A673 (cell line): ENCODE measurements at regions of chr2 and their contacts with region 1.

Region 1: DNA sequence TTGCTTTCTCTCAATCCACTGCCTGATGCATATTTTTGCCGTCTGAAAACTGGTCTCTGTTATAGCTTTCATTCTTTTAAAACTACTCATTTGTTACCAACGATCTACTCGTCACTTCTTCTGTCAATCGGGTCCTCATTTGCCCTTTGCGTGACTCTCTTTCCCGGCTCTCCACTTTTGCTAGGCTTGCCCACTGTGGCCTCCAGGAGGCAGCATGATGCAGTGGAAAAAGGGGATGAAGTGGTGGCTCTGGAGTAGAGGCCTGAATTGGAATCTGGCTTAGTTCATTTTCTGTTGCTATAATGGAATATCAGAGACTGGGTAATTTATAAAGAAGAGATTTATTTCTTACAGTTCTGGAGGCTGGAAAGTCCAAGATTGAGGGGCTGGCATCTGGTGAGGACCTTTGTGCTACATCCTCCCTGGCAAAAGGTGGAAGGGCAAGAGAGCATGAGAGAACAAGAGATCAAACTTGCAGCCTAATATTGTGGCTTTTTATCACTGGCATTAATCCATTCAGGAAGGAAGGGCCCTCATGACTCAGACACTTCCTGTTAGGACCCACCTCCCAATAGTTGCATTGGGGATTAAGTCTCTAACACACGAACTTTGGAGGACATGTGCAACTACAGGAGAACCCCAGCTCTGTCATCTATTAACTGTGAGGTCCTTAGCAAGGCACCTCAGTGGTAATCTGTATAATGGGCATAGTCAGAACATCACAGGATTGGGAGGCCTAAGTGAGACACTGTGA is 15.4 kb downstream of the GDF7 start:
- DNase-seq: no peak
- H3K4me3 ChIP-seq: no peak overlapping the region
- H3K27ac ChIP-seq: no peak overlapping the region
- H3K4me1 ChIP-seq: no peaks in the 10 kb centered on the region
- H3K27me3 ChIP-seq: no peaks in the 10 kb centered on the region
- CTCF ChIP-seq: peak; percentile 58

Region 2: DNA sequence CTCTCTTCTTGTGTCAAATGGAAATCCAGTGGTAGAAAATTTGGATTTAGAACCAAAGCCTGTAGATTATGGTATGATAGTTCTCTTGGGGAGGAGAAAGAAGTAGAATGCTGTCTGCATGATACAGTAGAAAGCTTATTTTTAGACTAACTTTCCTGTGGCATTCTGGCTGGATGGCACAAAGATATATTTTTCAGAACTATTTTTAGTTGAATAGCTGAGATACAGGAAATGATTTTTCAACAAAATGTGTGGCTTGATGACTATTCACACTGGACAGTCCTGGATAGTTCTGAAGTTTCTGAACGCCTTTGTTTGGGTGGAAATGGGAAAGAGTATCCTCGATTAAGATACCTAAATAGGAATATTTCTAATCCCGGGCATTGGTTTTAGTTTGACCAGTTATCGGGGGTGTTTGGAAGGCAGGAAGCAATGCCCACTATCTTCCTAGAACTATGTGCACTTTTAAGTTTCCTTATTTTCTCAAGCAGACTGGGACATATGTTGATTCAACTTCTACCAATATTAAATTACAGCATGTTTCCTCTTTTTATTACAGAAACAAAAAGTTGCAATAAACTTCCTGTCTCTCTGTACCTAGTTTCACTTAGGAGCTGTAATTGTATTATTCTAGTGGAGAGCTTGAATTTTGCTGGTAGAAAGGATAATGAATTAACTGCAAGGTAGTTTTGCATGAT is 16.7 kb after region 1 on chr2:
- CTCF ChIA-PET with region 1: no interaction called
- POLR2A ChIA-PET with region 1: no interaction called
- intact Hi-C with region 1: no loop called
- DNase-seq: no peak
- H3K4me3 ChIP-seq: no peak overlapping the region
- H3K27ac ChIP-seq: no peak overlapping the region
- H3K4me1 ChIP-seq: no peaks in the 10 kb centered on the region
- H3K27me3 ChIP-seq: no peaks in the 10 kb centered on the region
- CTCF ChIP-seq: no peak

Region 3: DNA sequence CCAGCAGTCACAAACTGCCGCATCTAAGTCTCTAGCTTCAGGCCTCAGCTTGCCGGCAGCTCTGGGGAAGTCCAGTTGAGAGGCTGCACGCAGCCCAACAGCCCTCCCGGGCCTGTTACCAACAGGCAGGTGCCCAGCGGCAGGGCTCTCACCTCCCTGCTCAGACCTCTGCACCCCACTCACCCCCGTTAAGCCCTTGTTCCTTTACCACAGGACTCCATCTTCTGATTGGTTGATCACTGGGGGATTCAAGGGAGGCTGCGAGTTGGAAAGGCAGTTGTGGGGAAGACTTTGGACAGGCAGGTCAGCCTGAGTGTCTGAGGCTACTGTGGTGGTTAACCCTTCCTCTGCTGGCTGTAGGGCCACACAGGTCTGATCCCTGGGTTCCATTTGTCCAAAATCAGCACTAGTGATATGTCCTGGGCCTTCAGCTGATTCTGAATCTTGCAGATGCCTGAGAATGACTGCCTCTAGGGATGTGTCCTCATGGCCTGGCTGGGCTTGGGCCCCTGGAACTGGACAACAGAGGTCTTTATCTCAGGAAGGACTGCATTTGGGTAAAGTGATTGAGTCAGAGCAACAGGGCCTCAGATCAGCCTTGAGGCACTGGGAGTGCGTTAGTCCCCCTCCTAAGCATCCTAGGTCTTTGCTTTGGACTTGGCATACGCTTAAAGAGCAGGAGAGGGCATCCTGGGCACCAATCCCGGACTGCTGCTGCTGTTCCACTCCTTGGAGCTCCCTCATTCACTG is 273.1 kb after region 1 on chr2:
- CTCF ChIA-PET with region 1: no interaction called
- POLR2A ChIA-PET with region 1: no interaction called
- intact Hi-C with region 1: loop called (anchors 5 kb)
- DNase-seq: no peak
- H3K4me3 ChIP-seq: no peak overlapping the region
- H3K27ac ChIP-seq: no peak overlapping the region
- H3K4me1 ChIP-seq: no peaks in the 10 kb centered on the region
- H3K27me3 ChIP-seq: peaks cover 27% of the 10 kb centered on the region
- CTCF ChIP-seq: no peak

Region 4: GRCh38 chr2:20986024-20986939 is 303.9 kb after region 1 on chr2:
- CTCF ChIA-PET with region 1: no interaction called
- POLR2A ChIA-PET with region 1: no interaction called
- intact Hi-C with region 1: no loop called
- DNase-seq: no peak
- H3K4me3 ChIP-seq: no peak overlapping the region
- H3K27ac ChIP-seq: no peak overlapping the region
- H3K4me1 ChIP-seq: no peaks in the 10 kb centered on the region
- H3K27me3 ChIP-seq: peaks cover 71% of the 10 kb centered on the region
- CTCF ChIP-seq: no peak